CD14-positive monocyte (primary cell): ENCODE measurements at regions of chr2 and their contacts with region 1.

Region 1: DNA sequence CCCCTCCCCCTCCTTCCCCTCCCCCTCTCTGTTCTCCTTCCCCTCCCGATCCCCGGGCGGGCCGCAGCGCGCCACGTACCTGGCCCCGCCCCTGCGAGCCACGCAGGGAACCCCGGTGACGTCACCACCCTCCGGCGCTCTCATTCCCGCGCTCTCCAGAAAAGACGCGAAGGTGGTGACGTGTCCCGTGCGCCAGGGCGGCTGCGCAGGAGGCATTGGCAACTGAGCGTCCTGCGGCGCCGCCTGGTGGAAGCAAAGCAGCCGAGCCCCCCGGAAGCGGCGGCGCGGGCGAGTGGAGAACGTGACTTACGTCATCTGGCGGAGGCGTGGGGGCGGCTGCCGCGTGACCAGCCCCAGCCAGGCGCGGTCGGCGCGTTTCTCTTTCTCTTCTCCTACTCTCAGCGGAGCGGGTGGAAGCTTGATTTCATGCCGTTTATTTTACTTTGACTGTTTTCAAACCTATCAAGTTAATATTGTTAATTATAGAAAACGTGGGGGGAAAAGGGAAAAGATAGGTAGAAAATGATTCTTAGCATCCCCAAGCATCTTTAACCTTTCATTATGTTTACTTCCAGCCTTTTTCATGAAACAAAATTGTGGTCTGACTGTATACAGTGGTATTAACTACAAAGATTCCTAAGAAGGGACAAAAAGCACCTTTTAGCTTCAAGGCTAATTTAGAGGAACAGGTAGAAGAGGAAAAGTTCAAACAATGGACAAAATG is 48.1 kb downstream of the C2orf42 start:
- DNase-seq: peak; percentile 98 to 100 (median 100)
- H3K4me3 ChIP-seq: peak overlapping the region; percentile 45 to 79 (median 46)
- H3K4me3 Mint-ChIP-seq: peak overlapping the region; percentile 77 to 89
- H3K27ac ChIP-seq: peak overlapping the region; percentile 80 to 98
- H3K27ac Mint-ChIP-seq: peak overlapping the region; percentile 94 to 100 (median 99)
- H3K4me1 ChIP-seq: peaks cover 32 to 42% of the 10 kb centered on the region in 2 donors
- H3K4me1 Mint-ChIP-seq: peaks cover 33% of the 10 kb centered on the region
- H3K27me3 ChIP-seq: no peaks in the 10 kb centered on the region
- H3K27me3 Mint-ChIP-seq: peaks cover 0 to 5% (median 1%) of the 10 kb centered on the region in 3 donors
- CTCF ChIP-seq: peak; percentile 87

Region 2: GRCh38 chr2:69985688-69986087 is 157.1 kb before region 1 on chr2:
- intact Hi-C with region 1: loop called in 1 of 2 experiments (anchors 5 kb)
- DNase-seq: peak; percentile 97 to 100 (median 97)
- H3K4me3 ChIP-seq: peak overlapping the region in 1 of 3 experiments; percentile 33
- H3K4me3 Mint-ChIP-seq: peak overlapping the region; percentile 20 to 47
- H3K27ac ChIP-seq: peak overlapping the region; percentile 58 to 90
- H3K27ac Mint-ChIP-seq: peak overlapping the region; percentile 93 to 96 (median 95)
- H3K4me1 ChIP-seq: peaks cover 31 to 35% of the 10 kb centered on the region in 2 donors
- H3K4me1 Mint-ChIP-seq: peaks cover 37% of the 10 kb centered on the region
- H3K27me3 ChIP-seq: no peaks in the 10 kb centered on the region
- H3K27me3 Mint-ChIP-seq: peaks cover 0 to 2% (median 0%) of the 10 kb centered on the region in 3 donors
- CTCF ChIP-seq: peak; percentile 42

Region 3: DNA sequence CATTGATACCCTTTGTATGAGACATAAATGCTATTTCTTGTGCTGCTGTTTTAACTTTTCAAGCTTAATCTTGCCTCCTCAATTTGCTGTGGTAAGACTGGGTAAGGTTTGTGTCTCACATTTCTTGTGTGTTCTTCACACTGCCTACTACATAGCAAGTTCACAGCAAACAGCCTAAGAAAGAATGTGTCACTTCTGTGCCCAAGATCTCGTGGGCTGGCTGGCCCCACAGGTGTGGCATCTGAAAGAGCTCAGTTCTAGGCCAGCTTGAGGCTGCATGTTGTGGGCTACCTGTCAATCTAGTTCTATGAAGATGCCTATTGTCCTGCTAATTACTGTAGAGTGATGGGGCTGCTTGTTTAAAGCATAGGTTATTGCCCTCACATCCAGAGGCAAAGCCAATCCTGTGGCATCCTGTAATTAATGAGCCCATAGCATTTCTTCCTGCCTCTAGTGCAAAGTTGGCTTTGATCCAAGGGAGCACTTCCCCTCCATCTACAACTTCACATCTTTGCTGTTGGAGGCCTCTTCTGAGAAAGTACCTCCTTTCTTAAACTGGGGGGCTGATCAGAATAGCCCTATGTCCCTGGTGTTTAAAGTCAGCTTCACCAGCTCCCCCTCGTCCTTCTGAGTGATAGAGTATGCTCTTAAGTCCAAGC is 140.4 kb before region 1 on chr2:
- intact Hi-C with region 1: no loop called
- DNase-seq: peak; percentile 55 to 74 (median 70)
- H3K4me3 ChIP-seq: no peak overlapping the region
- H3K4me3 Mint-ChIP-seq: no peak overlapping the region
- H3K27ac ChIP-seq: peak overlapping the region in 1 of 2 donors; percentile 52
- H3K27ac Mint-ChIP-seq: peak overlapping the region; percentile 41 to 87 (median 80)
- H3K4me1 ChIP-seq: peaks cover 17 to 18% of the 10 kb centered on the region in 2 donors
- H3K4me1 Mint-ChIP-seq: peaks cover 20% of the 10 kb centered on the region
- H3K27me3 ChIP-seq: no peaks in the 10 kb centered on the region
- H3K27me3 Mint-ChIP-seq: peaks cover 0 to 4% (median 0%) of the 10 kb centered on the region in 3 donors
- CTCF ChIP-seq: no peak

Region 4: GRCh38 chr2:70086838-70087701 is 55.7 kb before region 1 on chr2 and contains the start of gene PCBP1:
- intact Hi-C with region 1: loop called (anchors 2 kb)
- DNase-seq: peak; percentile 87 to 93 (median 93)
- H3K4me3 ChIP-seq: peak within 1 kb of the TSS; percentile 94 to 100 (median 95)
- H3K4me3 Mint-ChIP-seq: peak within 1 kb of the TSS; percentile 98 to 99
- H3K27ac ChIP-seq: peak within 1 kb of the TSS; percentile 99
- H3K27ac Mint-ChIP-seq: peak within 1 kb of the TSS; percentile 100
- H3K4me1 ChIP-seq: peaks cover 55 to 67% of the 10 kb centered on the region in 2 donors
- H3K4me1 Mint-ChIP-seq: peaks cover 56% of the 10 kb centered on the region
- H3K27me3 ChIP-seq: no peaks in the 10 kb centered on the region
- H3K27me3 Mint-ChIP-seq: peaks cover 0 to 5% (median 0%) of the 10 kb centered on the region in 3 donors
- CTCF ChIP-seq: no peak
- polyA plus RNA-seq, gene PCBP1: 178 to 299 (median 194) TPM

Region 5: DNA sequence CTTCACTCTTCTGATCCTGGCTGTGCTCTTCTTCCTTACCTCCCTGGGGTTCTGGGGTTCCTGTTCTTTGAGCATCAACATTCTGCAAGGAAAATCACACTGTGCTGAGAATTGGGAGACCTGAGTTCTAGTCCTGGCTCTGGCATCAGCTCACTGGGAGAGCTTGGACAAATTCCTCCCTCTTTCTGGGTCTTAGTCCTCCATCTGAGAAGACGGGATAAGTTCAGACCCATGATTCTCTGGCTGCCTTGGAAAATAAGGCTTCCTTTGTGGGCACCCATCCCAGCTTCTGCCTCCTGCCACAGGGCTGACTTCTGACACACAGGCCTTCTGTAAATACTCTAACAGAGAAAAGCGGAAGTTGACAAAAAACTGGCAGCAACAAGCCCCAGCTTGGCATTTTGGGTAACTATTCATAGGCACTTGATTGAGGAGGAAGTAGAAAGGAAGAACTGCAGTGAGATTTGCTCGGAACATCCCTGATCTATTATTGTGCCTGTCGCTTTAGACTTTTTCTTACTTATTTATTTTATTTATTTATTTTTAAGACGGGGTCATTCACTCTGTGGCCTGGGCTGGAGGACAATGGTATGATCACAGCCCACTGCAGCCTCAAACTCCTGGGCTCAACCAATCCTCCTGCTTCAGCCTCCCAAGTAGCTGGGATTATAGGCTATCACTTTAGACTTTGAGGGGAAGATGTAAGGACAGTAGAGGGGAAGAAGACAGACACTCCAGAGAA is 47.6 kb before region 1 on chr2:
- intact Hi-C with region 1: loop called in 1 of 2 experiments (anchors 2 kb)
- DNase-seq: peak; percentile 91 to 99 (median 93)
- H3K4me3 ChIP-seq: peak overlapping the region; percentile 25 to 63 (median 32)
- H3K4me3 Mint-ChIP-seq: peak overlapping the region; percentile 50 to 83
- H3K27ac ChIP-seq: peak overlapping the region; percentile 92 to 98
- H3K27ac Mint-ChIP-seq: peak overlapping the region; percentile 93 to 98 (median 96)
- H3K4me1 ChIP-seq: peaks cover 46 to 53% of the 10 kb centered on the region in 2 donors
- H3K4me1 Mint-ChIP-seq: peaks cover 46% of the 10 kb centered on the region
- H3K27me3 ChIP-seq: no peaks in the 10 kb centered on the region
- H3K27me3 Mint-ChIP-seq: peaks cover 0 to 6% (median 0%) of the 10 kb centered on the region in 3 donors
- CTCF ChIP-seq: no peak

Region 6: GRCh38 chr2:70124983-70125480 is 17.7 kb before region 1 on chr2:
- intact Hi-C with region 1: loop called in 1 of 2 experiments (anchors 2 kb)
- DNase-seq: peak; percentile 87 to 98 (median 94)
- H3K4me3 ChIP-seq: peak overlapping the region; percentile 42 to 81 (median 70)
- H3K4me3 Mint-ChIP-seq: peak overlapping the region; percentile 86 to 96
- H3K27ac ChIP-seq: peak overlapping the region; percentile 99 to 100
- H3K27ac Mint-ChIP-seq: peak overlapping the region; percentile 100
- H3K4me1 ChIP-seq: peaks cover 60 to 69% of the 10 kb centered on the region in 2 donors
- H3K4me1 Mint-ChIP-seq: peaks cover 68% of the 10 kb centered on the region
- H3K27me3 ChIP-seq: no peaks in the 10 kb centered on the region
- H3K27me3 Mint-ChIP-seq: peaks cover 0 to 4% (median 0%) of the 10 kb centered on the region in 3 donors
- CTCF ChIP-seq: no peak

Region 7: GRCh38 chr2:71558300-71559051 is 1415.7 kb after region 1 on chr2:
- intact Hi-C with region 1: no loop called
- DNase-seq: no peak
- H3K4me3 ChIP-seq: no peak overlapping the region
- H3K4me3 Mint-ChIP-seq: no peak overlapping the region
- H3K27ac ChIP-seq: no peak overlapping the region
- H3K27ac Mint-ChIP-seq: peak overlapping the region in 2 of 7 donors; percentile 15 to 62
- H3K4me1 ChIP-seq: no peaks in the 10 kb centered on the region
- H3K4me1 Mint-ChIP-seq: no peaks in the 10 kb centered on the region
- H3K27me3 ChIP-seq: no peaks in the 10 kb centered on the region
- H3K27me3 Mint-ChIP-seq: peaks cover 2 to 6% (median 5%) of the 10 kb centered on the region in 3 donors
- CTCF ChIP-seq: no peak